IMR-90 (cell line): ENCODE measurements at regions of chr15 and their contacts with region 1.

Region 1: GRCh38 chr15:56918046-56918938 is at the start of gene TCF12:
- DNase-seq: peak; percentile 95
- ATAC-seq: peak; percentile 96
- H3K4me3 ChIP-seq: peak within 1 kb of the TSS; percentile 97
- H3K27ac ChIP-seq: peak within 1 kb of the TSS; percentile 98
- H3K4me1 ChIP-seq: 0 out of 2 replicates have a peak, but pooled peaks cover 5% of the 10 kb centered on the region
- H3K27me3 ChIP-seq: no peaks in the 10 kb centered on the region
- CTCF ChIP-seq: peak; percentile 44
- POLR2A ChIP-seq: peak; percentile 63
- RAD21 ChIP-seq: peak; percentile 38; the same call in 1 of the 2 replicates
- total RNA-seq, gene TCF12: 123 and 160 TPM in 2 replicates

Region 2: GRCh38 chr15:56732921-56733797 is 185.1 kb before region 1 on chr15 and contains the start of gene ZNF280D:
- CTCF ChIA-PET with region 1: no interaction called
- POLR2A ChIA-PET with region 1: no interaction called
- dilution Hi-C with region 1: no loop called
- in situ Hi-C with region 1: no loop called
- intact Hi-C with region 1: loop called (anchors 5 kb)
- DNase-seq: peak; percentile 85
- ATAC-seq: peak; percentile 92
- H3K4me3 ChIP-seq: peak within 1 kb of the TSS; percentile 87
- H3K27ac ChIP-seq: peak within 1 kb of the TSS; percentile 94
- H3K4me1 ChIP-seq: peaks cover 4% of the 10 kb centered on the region
- H3K27me3 ChIP-seq: no peaks in the 10 kb centered on the region
- CTCF ChIP-seq: no peak
- POLR2A ChIP-seq: peak; percentile 75
- RAD21 ChIP-seq: no peak
- total RNA-seq, gene ZNF280D: 21.0 and 28.6 TPM in 2 replicates

Region 3: GRCh38 chr15:56744701-56745683 is 173.3 kb before region 1 on chr15:
- CTCF ChIA-PET with region 1: no interaction called
- POLR2A ChIA-PET with region 1: no interaction called
- dilution Hi-C with region 1: no loop called
- in situ Hi-C with region 1: no loop called
- intact Hi-C with region 1: no loop called
- DNase-seq: peak; percentile 21
- ATAC-seq: peak; percentile 50
- H3K4me3 ChIP-seq: no peak overlapping the region
- H3K27ac ChIP-seq: no peak overlapping the region
- H3K4me1 ChIP-seq: peaks cover 4% of the 10 kb centered on the region
- H3K27me3 ChIP-seq: no peaks in the 10 kb centered on the region
- CTCF ChIP-seq: no peak
- POLR2A ChIP-seq: no peak
- RAD21 ChIP-seq: no peak

Region 4: DNA sequence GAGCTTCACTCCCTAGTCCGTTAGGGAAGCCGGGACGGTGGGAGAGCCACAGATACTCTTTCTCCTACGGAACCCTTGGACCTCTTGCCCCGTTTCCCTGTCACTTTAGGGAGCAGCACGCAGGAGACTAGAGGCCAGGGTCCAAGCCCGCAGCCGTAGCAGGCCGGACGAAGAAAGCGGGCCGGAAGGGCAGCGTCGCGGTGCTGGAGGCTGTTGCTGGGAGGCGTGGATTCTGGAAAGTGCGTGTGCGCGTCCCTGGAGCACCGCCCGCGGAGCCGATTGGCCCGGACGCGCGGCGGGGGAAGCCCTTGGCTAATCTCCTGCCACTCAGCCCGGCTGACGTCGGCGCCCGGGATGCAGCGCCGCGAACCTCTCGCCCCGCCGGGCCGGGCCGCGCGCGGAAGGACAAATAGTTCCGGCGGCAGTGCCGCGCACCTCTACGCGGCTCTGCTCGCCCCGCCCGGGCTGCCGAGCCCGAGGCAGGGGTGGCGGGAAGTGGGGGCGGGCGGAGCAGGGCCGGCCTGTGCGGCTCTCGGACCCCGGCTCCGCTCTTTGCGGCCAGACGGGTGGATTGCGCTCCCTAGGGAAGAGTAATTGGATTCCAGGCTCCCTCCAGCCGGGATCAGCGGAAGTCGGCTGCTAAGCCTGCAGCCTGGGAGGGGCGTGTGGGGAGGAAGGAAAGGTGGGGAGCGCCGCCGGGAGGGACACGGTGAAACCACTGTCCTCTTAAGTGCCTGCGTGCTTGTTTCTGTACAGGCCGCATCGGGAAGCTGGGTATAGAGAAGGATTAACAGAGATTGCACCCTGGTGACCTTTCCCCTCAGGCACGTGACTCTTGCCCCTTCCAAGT is 31.1 kb before region 1 on chr15:
- CTCF ChIA-PET with region 1: no interaction called
- POLR2A ChIA-PET with region 1: interaction called, 6 read pairs
- dilution Hi-C with region 1: no loop called
- in situ Hi-C with region 1: no loop called
- intact Hi-C with region 1: loop called (anchors 1 kb)
- DNase-seq: peak; percentile 95
- ATAC-seq: peak; percentile 97
- H3K4me3 ChIP-seq: peak overlapping the region; percentile 58
- H3K27ac ChIP-seq: peak overlapping the region; percentile 91
- H3K4me1 ChIP-seq: peaks cover 6% of the 10 kb centered on the region; the same call in 1 of the 2 replicates
- H3K27me3 ChIP-seq: no peaks in the 10 kb centered on the region
- CTCF ChIP-seq: 0 out of 2 replicates have a peak, but pooled peaks have one; percentile 19
- POLR2A ChIP-seq: peak; percentile 83
- RAD21 ChIP-seq: peak; percentile 10; the same call in 1 of the 2 replicates

Region 5: GRCh38 chr15:56978900-56979662 is 60.8 kb after region 1 on chr15:
- CTCF ChIA-PET with region 1: no interaction called
- POLR2A ChIA-PET with region 1: no interaction called
- dilution Hi-C with region 1: no loop called
- in situ Hi-C with region 1: no loop called
- intact Hi-C with region 1: no loop called
- DNase-seq: peak; percentile 71
- ATAC-seq: peak; percentile 74; the same call in 1 of the 2 replicates
- H3K4me3 ChIP-seq: no peak overlapping the region
- H3K27ac ChIP-seq: no peak overlapping the region
- H3K4me1 ChIP-seq: peaks cover 10% of the 10 kb centered on the region
- H3K27me3 ChIP-seq: no peaks in the 10 kb centered on the region
- CTCF ChIP-seq: no peak
- POLR2A ChIP-seq: no peak
- RAD21 ChIP-seq: no peak

Region 6: GRCh38 chr15:57012556-57012955 is 94.3 kb after region 1 on chr15:
- CTCF ChIA-PET with region 1: no interaction called
- POLR2A ChIA-PET with region 1: no interaction called
- dilution Hi-C with region 1: no loop called
- in situ Hi-C with region 1: no loop called
- intact Hi-C with region 1: no loop called
- DNase-seq: no peak
- ATAC-seq: no peak
- H3K4me3 ChIP-seq: no peak overlapping the region
- H3K27ac ChIP-seq: no peak overlapping the region
- H3K4me1 ChIP-seq: peaks cover 5% of the 10 kb centered on the region
- H3K27me3 ChIP-seq: no peaks in the 10 kb centered on the region
- CTCF ChIP-seq: no peak
- POLR2A ChIP-seq: no peak
- RAD21 ChIP-seq: no peak

Region 7: DNA sequence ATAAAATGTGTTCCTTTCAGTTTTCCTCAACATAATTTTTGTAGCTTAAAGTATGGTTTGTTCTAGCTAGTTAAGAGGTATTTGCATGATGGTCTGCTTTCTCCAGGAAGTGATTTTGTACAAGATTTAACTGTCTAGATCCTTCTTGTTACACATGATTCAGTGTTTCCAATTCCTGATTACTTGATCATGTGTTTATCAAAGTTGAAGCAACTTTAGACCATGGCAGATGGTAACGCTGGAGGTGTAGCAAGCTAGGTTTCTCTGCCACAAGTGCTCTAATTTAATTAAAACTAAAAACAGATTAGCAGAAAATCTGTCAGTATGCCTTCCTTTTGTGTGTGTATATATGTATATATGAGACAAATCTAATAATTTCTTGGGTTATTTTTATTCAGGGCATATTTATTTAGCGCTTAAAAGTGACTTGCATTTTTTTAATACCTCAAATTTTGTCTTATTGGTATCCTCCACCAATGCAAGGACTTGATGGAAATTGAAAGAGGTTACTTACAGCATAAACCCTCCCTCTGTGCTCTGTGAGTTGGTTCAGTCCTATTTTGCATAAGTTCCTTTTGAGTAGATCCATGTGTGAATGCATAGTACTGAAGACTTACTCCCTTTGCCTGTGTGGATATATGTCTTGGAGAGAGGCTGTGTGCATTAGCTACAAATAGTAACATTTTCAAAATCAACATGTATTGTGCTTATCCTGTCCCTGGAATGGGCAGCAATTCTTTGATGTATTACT is 300.7 kb after region 1 on chr15:
- CTCF ChIA-PET with region 1: no interaction called
- POLR2A ChIA-PET with region 1: no interaction called
- dilution Hi-C with region 1: no loop called
- in situ Hi-C with region 1: no loop called
- intact Hi-C with region 1: loop called (anchors 2 kb)
- DNase-seq: peak; percentile 96
- ATAC-seq: peak; percentile 65
- H3K4me3 ChIP-seq: peak overlapping the region; percentile 79
- H3K27ac ChIP-seq: peak overlapping the region; percentile 74; the same call in 1 of the 2 replicates
- H3K4me1 ChIP-seq: peaks cover 10% of the 10 kb centered on the region
- H3K27me3 ChIP-seq: no peaks in the 10 kb centered on the region
- CTCF ChIP-seq: no peak
- POLR2A ChIP-seq: no peak
- RAD21 ChIP-seq: no peak

Region 8: GRCh38 chr15:57527382-57528091 is 609.2 kb after region 1 on chr15:
- CTCF ChIA-PET with region 1: no interaction called
- POLR2A ChIA-PET with region 1: no interaction called
- dilution Hi-C with region 1: no loop called
- in situ Hi-C with region 1: loop called (anchors 25 kb)
- intact Hi-C with region 1: no loop called
- DNase-seq: peak; percentile 88
- ATAC-seq: peak; percentile 83
- H3K4me3 ChIP-seq: no peak overlapping the region
- H3K27ac ChIP-seq: no peak overlapping the region
- H3K4me1 ChIP-seq: no peaks in the 10 kb centered on the region
- H3K27me3 ChIP-seq: peaks cover 39% of the 10 kb centered on the region
- CTCF ChIP-seq: peak; percentile 78
- POLR2A ChIP-seq: no peak
- RAD21 ChIP-seq: peak; percentile 92